Cardiac septum (tissue), 1 donor: ENCODE measurements at regions of chr7 and their contacts with region 1.

Region 1: GRCh38 chr7:1225441-1226185 is 7.1 kb upstream of the UNCX start:
- DNase-seq: no peak

Region 2: DNA sequence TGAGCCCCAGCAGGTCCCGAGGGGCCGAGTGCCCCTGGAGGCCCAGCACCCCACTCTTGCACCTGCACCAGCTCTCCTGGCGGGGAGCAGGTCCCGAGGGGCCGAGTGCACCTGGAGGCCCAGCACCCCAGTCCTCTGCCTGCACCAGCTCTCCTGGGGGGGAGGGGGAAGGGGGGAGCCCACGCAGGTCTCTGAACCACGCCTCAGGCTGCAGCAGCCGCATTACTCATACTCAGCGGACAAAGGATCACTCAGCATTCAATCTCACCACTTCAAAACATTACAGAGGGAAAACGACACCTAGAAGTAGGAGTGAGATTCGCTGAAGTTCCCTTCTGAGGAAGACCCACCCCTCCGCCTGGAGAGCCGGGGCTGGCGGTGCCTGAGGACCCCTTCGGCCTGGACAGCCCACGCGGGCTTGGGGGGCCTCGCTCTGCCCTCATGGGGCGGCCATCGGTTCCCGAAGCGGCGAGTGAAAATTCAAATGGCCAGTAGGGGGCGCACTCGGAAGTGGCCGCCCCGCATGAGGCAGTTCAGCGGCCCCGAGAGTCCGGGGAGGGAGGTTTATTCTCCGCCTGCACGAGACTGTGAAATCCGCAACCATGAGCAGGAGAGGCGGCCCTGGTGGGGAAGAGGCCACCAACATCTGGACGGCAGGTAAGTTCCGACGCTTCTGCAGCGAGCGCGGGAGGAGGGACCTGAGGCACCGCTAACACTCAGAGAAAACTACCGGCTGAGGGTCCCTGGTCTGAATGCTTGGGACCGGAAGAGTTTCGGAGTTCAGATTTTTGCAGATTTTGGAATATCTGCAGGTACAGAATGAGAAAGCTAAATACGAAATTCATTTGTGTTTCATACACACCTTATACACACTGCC is 138.8 kb before region 1 on chr7:
- intact Hi-C with region 1: no loop called
- DNase-seq: peak; percentile 87

Region 3: DNA sequence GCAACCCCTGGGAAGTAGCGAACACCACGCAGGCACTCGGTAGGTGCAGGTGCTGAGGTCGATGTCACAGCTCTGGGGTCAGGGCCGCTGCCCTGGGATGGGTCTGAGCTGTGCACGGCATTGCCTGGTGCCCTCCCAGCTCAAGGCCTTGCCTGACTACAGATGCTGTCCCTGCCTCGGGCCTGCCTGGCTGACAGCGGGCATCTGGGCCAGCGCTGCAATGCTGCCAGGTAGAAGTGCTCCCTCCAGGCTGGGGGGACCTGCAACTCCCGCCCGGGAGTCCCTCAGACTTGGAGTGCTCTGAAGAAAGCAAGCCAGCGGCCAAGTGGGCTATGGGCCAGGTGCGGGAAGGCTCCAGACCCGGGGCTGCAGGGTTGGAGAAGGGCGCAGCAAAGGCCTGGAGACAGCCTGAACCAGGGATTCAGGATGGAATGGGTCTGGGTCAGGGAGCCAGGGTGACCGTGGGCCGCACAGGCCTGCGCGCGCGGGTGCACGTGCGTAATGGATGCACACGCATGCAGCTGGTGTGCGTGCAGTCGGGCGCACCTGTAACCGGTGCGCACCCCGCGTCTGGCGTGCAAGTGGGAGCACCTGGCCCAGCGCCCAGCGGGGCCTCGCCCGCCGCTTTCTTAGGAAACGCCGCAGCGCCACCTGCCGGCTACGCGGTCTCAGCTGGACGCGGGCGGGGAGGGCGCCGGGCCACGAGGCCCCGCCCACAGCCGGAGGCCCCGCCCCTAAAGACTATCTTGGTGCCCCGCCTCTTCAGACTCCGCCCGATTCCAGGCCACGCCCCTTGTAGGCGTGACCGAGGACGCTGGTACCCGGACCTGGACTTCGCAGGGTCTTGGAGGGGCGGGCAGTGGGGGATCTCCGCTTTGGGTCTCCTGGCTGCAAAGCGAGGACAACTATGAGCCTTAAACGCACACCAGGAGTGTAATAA is 187.0 kb after region 1 on chr7:
- intact Hi-C with region 1: loop called (anchors 5 kb)
- DNase-seq: peak; percentile 89

Region 4: GRCh38 chr7:1432411-1433082 is 206.9 kb after region 1 on chr7:
- intact Hi-C with region 1: loop called (anchors 10 kb)
- DNase-seq: peak; percentile 84

Region 5: GRCh38 chr7:1473864-1474512 is 248.4 kb after region 1 on chr7:
- intact Hi-C with region 1: loop called (anchors 2 kb)
- DNase-seq: peak; percentile 93